Posterior cingulate gyrus (tissue), 11 donors: ENCODE measurements at regions of chr7 and their contacts with region 1.

Region 1: DNA sequence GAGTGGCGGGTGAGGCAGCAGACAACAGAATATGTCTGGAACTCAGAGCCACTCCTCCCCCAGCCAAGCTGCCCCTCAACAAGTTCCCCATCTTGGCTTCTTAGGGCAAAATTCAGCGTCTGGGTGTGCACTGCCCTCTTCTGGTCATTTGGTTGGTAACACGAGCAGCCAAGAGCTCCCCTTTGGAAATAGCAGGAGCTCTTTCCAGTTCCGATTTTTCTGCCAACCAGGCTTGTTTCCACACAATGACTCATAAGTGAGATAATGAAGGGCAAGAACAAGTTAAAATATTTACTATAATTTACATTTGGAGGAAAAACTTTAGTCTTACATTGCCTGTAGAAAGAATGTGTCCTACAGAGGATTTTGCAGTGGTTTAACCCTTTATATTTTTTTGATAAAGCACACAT is 70.5 kb downstream of the ADCYAP1R1 start:
- DNase-seq: peak in 9 of 10 donors; percentile 44 to 94 (median 71)

Region 2: DNA sequence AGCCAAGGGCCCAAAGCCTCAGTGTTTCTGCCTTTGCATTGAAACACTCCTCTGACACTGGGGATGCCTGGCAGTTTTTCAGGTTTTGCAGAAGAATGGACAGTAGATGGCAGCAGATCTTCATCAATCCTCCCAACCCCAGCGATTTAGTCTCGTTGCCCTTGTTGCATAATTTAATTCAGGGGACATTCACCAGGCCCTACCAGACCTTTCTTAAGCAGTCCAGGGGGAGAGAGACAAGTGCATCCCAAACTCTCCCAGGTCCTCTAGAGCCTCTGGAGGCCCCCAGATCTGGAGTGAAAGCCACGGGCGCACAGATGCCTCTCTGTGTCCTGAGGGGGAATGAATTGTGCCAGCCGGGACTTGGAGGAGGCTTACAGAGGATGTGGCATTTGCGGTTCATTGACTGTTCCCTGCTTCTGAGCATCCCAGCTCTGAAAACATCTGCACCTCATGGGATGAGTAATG is 321.8 kb before region 1 on chr7:
- intact Hi-C with region 1: loop called (anchors 1 kb)
- DNase-seq: peak in 6 of 10 donors; percentile 50 to 89 (median 62)

Region 3: GRCh38 chr7:30983042-30983913 is 139.4 kb before region 1 on chr7:
- intact Hi-C with region 1: loop called (anchors 1 kb)
- DNase-seq: peak; percentile 77 to 98 (median 91)

Region 4: DNA sequence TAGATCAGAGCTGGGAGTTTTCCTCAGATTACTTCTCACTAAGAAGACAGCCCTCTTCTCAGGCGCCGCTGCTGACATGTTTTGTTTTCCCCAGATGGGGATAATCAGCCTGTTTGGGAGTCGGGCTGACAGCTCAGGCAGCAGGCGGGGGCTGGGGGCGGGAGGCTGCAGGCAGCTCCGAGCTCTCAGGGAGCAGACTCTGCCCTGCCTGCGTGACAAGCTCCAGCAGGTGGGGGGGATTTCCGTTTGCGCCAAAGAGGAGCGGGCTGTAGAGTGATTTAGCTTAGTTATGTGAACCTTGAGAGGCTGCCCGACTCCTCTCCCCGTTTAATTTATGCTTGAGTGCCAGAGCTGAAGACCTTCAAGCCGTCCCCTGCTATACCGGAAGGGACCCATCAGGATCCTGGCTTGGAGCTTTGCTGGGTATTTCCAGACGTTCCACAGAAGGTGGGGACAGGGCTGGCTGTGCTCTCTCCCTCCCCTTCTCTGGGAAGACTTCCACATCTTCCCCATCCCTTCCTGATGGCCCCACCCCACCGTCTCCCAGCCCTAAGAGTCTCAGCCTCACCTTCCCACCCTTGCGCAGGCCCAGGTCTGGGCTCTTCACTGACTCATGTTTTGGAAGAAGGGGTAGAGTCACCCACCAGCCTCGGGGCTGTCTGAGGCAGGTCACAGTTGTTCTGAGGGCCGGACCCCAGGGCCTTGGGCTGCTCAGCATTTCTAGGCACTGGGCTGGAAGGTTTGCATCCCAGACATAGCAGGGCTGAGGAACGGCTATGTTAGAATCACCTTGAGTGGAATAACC is 95.3 kb before region 1 on chr7:
- intact Hi-C with region 1: no loop called
- DNase-seq: peak in 9 of 10 donors; percentile 14 to 96 (median 71)